Caco-2 (cell line): ENCODE measurements at regions of chr4 and their contacts with region 1.

Region 1: DNA sequence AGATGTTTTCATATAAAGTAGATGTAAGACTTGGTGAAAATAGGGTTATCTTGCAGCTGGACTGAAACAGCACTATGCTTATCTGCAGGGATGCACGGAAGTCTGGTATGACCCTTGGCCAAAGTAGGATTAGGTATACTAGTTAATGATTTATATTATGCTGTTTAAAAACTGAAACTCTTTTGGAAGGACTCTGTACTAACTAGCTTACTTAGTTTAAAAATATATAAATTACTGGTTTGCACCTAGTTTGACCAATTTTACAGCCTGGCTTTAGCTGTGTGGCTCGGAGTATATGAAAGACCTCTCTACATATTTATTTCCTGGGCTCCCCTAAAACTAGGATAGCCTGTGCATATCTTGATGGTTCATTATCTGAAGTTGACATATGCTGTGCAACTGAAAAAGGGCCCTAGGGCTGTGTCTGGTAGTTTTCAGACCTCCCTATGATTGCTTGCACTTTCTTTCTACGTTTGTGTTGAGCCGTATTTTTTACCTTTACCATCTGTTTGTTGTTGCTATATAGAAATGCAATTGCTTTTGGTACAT is 89.2 kb downstream of the TMEM144 start:
- DNase-seq: peak; percentile 42 to 51
- H3K4me3 ChIP-seq: no peak overlapping the region
- H3K4me3 Mint-ChIP-seq: no peak overlapping the region
- H3K27ac Mint-ChIP-seq: no peak overlapping the region
- H3K4me1 ChIP-seq: peaks cover 38% of the 10 kb centered on the region
- H3K4me1 Mint-ChIP-seq: peaks cover 23% of the 10 kb centered on the region
- H3K27me3 ChIP-seq: no peaks in the 10 kb centered on the region
- H3K27me3 Mint-ChIP-seq: no peaks in the 10 kb centered on the region
- CTCF ChIP-seq: no peak

Region 2: GRCh38 chr4:158243071-158243470 is 56.5 kb before region 1 on chr4:
- CTCF ChIA-PET with region 1: no interaction called
- POLR2A ChIA-PET with region 1: no interaction called
- intact Hi-C with region 1: loop called (anchors 2 kb)
- DNase-seq: peak in 1 of 2 experiments; percentile 41
- H3K4me3 ChIP-seq: no peak overlapping the region
- H3K4me3 Mint-ChIP-seq: peak overlapping the region; percentile 20
- H3K27ac Mint-ChIP-seq: peak overlapping the region; percentile 71
- H3K4me1 ChIP-seq: peaks cover 13% of the 10 kb centered on the region
- H3K4me1 Mint-ChIP-seq: peaks cover 14% of the 10 kb centered on the region
- H3K27me3 ChIP-seq: no peaks in the 10 kb centered on the region
- H3K27me3 Mint-ChIP-seq: no peaks in the 10 kb centered on the region
- CTCF ChIP-seq: no peak

Region 3: GRCh38 chr4:158327525-158327924 is 28.0 kb after region 1 on chr4:
- CTCF ChIA-PET with region 1: interaction called, 3 read pairs
- POLR2A ChIA-PET with region 1: interaction called, 3 read pairs
- intact Hi-C with region 1: loop called (anchors 2 kb)
- DNase-seq: peak; percentile 53 to 72
- H3K4me3 ChIP-seq: no peak overlapping the region
- H3K4me3 Mint-ChIP-seq: no peak overlapping the region
- H3K27ac Mint-ChIP-seq: no peak overlapping the region
- H3K4me1 ChIP-seq: no peaks in the 10 kb centered on the region
- H3K4me1 Mint-ChIP-seq: no peaks in the 10 kb centered on the region
- H3K27me3 ChIP-seq: no peaks in the 10 kb centered on the region
- H3K27me3 Mint-ChIP-seq: no peaks in the 10 kb centered on the region
- CTCF ChIP-seq: no peak